Dorsolateral prefrontal cortex (tissue), 120 donors: ENCODE measurements at regions of chr1 and their contacts with region 1.

Region 1: GRCh38 chr1:223845810-223846682 is at the start of gene TP53BP2:
- DNase-seq: peak; percentile 72 to 91 (median 81)
- H3K4me3 ChIP-seq: peak within 1 kb of the TSS; percentile 65 to 95 (median 83)
- H3K27ac ChIP-seq: peak within 1 kb of the TSS; percentile 94 to 100 (median 99)
- H3K27me3 ChIP-seq: no peaks in the 10 kb centered on the region
- CTCF ChIP-seq: peak; percentile 49 to 87 (median 73)
- total RNA-seq, gene TP53BP2: 32.0 to 134 (median 60.9) TPM

Region 2: GRCh38 chr1:223712194-223712849 is 133.7 kb before region 1 on chr1 and contains the start of gene CAPN2:
- intact Hi-C with region 1: loop called in 1 of 2 experiments (anchors 2 kb)
- DNase-seq: peak; percentile 42 to 87 (median 66)
- H3K4me3 ChIP-seq: peak within 1 kb of the TSS; percentile 66 to 92 (median 80)
- H3K27ac ChIP-seq: peak within 1 kb of the TSS in 58 of 59 donors; percentile 73 to 96 (median 91)
- H3K27me3 ChIP-seq: no peaks in the 10 kb centered on the region
- CTCF ChIP-seq: peak; percentile 25 to 87 (median 69)
- total RNA-seq, gene CAPN2: 66.7 to 318 (median 103) TPM

Region 3: GRCh38 chr1:223755992-223756775 is 89.9 kb before region 1 on chr1:
- intact Hi-C with region 1: loop called (anchors 5 kb)
- DNase-seq: peak in 9 of 10 donors; percentile 69 to 87 (median 81)
- H3K4me3 ChIP-seq: no peak overlapping the region
- H3K27ac ChIP-seq: peak overlapping the region; percentile 51 to 96 (median 87)
- H3K27me3 ChIP-seq: no peaks in the 10 kb centered on the region
- CTCF ChIP-seq: peak; percentile 17 to 89 (median 66)

Region 4: DNA sequence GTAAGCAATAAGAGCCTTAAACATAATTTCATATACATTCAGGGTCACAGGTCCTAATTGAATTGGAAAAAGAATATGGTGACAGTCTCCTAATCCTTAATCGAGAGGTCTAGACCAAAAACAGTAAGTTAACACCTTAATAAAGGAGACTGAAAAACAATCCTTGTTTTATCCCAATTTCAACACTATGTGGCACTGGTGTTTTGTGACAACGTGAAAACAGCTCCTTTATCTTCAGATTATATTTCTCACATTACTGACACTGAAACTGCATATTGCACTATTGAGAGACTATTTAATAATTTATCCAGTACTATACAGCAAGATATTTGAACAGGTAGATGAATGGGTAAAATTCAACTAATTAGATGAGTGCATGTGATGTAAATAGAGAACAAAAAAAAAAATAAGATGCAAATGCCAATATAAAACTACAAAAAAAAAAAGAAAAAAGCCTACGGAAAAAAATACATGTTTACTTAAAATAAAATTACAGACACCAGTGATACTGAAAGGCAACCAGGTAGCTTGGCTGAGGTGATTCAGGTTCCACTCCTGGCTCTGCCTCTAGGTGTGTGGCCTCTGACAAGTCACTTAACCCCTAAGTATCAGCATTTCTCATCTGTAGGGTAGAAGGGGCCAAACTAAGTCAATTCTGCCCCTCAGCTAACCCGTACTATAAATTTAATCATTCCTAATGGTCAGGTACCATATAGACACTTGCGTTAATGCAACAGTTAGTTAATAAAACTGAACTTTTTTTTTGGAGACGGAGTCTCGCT is 34.2 kb before region 1 on chr1:
- intact Hi-C with region 1: loop called (anchors 2 to 5 kb)
- DNase-seq: no peak
- H3K4me3 ChIP-seq: no peak overlapping the region
- H3K27ac ChIP-seq: peak overlapping the region in 21 of 59 donors; percentile 3 to 67 (median 37)
- H3K27me3 ChIP-seq: no peaks in the 10 kb centered on the region
- CTCF ChIP-seq: peak in 55 of 56 donors; percentile 48 to 88 (median 67)

Region 5: GRCh38 chr1:223887747-223888418 is 41.8 kb after region 1 on chr1:
- intact Hi-C with region 1: no loop called
- DNase-seq: no peak
- H3K4me3 ChIP-seq: no peak overlapping the region
- H3K27ac ChIP-seq: peak overlapping the region in 1 of 59 donors; percentile 10
- H3K27me3 ChIP-seq: no peaks in the 10 kb centered on the region
- CTCF ChIP-seq: no peak